ENCODE measurements at regions of chr7 and their contacts with region 1.

Region 1: DNA sequence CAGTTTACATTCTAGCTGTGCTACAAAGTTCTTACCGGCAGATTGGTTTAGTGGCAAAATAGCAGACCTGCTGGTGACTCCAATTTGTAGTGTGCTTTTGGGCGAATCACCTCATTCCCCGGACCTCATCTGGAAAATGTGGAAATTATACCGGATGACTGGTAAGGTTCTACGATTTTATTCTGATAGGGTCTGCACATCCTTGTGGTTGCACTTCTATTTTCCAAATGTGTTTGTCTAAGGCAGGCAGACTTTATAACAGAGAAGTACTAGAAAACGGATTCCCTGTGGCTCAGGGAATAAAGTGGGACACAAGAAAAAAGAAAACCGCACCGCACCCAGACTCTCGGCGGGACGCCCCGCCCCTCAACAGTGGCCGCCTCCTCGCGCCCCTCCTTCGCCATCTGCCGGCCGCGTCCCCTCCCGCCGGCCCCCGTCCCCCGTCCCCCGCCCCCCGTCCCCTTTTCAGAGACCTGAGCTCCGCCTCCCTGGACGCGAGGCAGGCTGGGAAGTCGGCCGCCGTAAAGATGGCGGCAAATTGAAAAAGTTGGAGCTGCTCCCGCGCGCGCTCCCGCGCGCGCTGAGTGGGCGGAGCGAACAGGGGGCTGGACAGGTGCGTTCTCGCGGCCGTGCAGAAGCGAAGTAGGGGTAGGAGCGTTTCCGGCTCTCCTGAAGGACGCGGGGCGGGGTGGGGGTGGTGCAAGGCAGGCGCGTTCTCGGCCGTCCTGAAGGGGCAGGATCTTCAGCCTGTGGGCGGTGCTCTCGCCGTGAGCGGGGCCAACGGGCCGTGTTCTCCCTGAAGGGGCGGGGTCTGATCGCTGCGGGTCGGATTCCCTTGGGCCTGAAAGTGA is 531 bp upstream of the CCM2 start:
- DNase-seq: peak; percentile 100
- H3K4me3 ChIP-seq: peak overlapping the region; percentile 65 to 93 (median 85)
- H3K27ac ChIP-seq: peak overlapping the region; percentile 77 to 96 (median 92)
- H3K4me1 ChIP-seq: peaks cover 16 to 30% (median 28%) of the 10 kb centered on the region in 4 donors
- H3K27me3 ChIP-seq: no peaks in the 10 kb centered on the region
- CTCF ChIP-seq: peak in 2 of 3 experiments; percentile 4 to 16
- EP300 ChIP-seq: no peak
- POLR2A ChIP-seq: no peak

Region 2: GRCh38 chr7:44944821-44945220 is 54.6 kb before region 1 on chr7:
- intact Hi-C with region 1: no loop called
- DNase-seq: no peak
- H3K4me3 ChIP-seq: no peak overlapping the region
- H3K27ac ChIP-seq: no peak overlapping the region
- H3K4me1 ChIP-seq: no peaks in the 10 kb centered on the region
- H3K27me3 ChIP-seq: peaks cover 0 to 17% (median 0%) of the 10 kb centered on the region in 4 donors
- CTCF ChIP-seq: no peak
- EP300 ChIP-seq: no peak
- POLR2A ChIP-seq: no peak

Region 3: GRCh38 chr7:44959433-44959951 is 40.0 kb before region 1 on chr7:
- intact Hi-C with region 1: no loop called
- DNase-seq: no peak
- H3K4me3 ChIP-seq: no peak overlapping the region
- H3K27ac ChIP-seq: no peak overlapping the region
- H3K4me1 ChIP-seq: peaks cover 9 to 15% (median 14%) of the 10 kb centered on the region in 4 donors
- H3K27me3 ChIP-seq: peaks cover 0 to 34% (median 0%) of the 10 kb centered on the region in 4 donors
- CTCF ChIP-seq: no peak
- EP300 ChIP-seq: no peak
- POLR2A ChIP-seq: no peak

Region 4: GRCh38 chr7:45089341-45089891 is 89.9 kb after region 1 on chr7:
- intact Hi-C with region 1: loop called (anchors 10 kb)
- DNase-seq: no peak
- H3K4me3 ChIP-seq: peak overlapping the region; percentile 68 to 81 (median 76)
- H3K27ac ChIP-seq: peak overlapping the region; percentile 84 to 88 (median 86)
- H3K4me1 ChIP-seq: peaks cover 5 to 24% (median 22%) of the 10 kb centered on the region in 4 donors
- H3K27me3 ChIP-seq: no peaks in the 10 kb centered on the region
- CTCF ChIP-seq: no peak
- EP300 ChIP-seq: no peak
- POLR2A ChIP-seq: no peak

Region 5: DNA sequence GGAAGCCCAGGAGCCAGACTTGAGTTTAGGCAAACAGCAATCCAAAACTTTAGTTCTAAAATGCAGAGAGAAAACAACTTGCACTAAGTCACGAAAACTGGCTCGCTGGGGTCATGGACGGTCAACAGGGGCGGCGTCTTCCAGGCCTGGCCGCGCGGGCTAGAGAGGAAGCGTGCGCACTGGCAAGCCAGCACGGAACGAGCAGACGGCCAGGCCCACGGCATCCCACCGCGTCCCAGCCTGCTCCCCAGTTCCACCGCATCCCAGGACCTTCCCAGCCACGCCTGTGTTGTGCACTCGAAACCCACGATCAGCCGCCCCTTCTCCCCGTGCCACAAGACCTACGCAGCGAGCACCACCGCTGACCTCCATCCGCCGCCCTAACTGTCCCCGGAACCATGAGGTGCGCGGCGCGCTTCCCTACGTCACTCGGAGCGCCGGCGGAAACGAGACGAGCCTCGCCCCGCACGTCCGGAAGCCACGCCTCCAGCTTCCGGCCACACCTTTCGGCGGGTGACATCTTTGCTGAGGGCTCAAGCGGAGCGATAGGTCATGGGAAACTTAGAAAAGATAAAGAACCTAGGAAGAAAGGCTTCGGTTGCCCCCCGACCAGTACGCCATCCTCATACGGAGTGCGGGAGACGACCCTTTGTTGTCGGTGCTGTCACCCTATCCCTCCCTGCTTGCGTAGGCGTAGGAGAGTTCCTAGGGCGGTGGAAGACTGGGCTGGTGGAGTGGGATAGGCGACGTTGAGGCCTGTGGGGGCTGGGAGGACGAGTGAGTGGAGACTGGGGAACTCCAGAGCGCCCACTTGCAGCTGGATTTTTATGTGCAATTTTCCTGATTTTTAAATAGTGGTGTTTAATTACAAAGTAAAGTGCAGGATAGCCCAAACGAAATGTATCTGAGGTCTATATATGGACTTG is 112.1 kb after region 1 on chr7 and contains the start of gene TBRG4:
- intact Hi-C with region 1: loop called (anchors 5 kb)
- DNase-seq: peak; percentile 98
- H3K4me3 ChIP-seq: peak within 1 kb of the TSS; percentile 68 to 85 (median 79)
- H3K27ac ChIP-seq: peak within 1 kb of the TSS; percentile 91 to 95 (median 92)
- H3K4me1 ChIP-seq: peaks cover 40 to 53% (median 50%) of the 10 kb centered on the region in 4 donors
- H3K27me3 ChIP-seq: no peaks in the 10 kb centered on the region
- CTCF ChIP-seq: peak; percentile 30 to 46 (median 36)
- EP300 ChIP-seq: no peak
- POLR2A ChIP-seq: peak; percentile 73
- total RNA-seq, gene TBRG4: 45.7 to 60.1 (median 53.7) TPM